ENCODE measurements at regions of chr19 and their contacts with region 1.

Region 1: DNA sequence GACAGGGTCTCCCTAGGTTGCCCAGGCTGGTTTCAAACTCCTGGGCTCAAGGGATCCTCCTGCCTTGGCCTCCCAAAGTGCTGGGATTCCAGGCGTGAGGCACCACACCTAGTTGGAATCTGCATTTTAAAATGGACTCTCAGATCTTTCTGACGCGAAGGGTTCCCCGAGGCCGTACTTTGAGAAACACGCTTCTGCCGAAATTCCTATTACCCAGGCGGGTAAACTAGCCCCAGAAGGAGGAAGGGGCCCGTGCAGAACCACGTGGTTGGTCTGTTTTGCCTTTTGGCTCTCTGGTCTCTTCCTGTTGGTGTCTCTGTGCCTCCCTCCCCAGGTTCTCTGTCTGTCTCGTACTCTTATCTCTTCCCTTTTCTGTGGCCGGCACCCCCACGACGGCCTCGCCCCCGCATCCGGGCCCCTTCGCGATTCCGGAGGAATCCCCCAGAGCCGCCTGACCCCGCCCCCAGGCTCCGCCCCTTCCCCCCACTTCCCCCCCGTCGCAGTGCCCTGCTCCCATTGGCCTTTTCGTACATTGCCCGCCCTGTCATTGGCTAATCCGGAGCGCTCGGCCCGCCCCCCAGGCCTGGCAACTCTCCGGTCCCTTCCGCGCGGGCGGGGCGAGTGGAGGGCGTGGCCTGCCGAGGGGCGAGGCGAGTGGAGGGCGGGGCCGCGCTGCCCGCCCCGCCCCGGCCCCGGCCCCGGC is at the start of gene TNFAIP8L1:
- DNase-seq: peak; percentile 98
- H3K4me3 ChIP-seq: peak within 1 kb of the TSS; percentile 91 to 99 (median 94)
- H3K27ac ChIP-seq: peak within 1 kb of the TSS; percentile 69 to 97 (median 95)
- H3K4me1 ChIP-seq: peaks cover 0 to 56% (median 43%) of the 10 kb centered on the region in 4 donors
- H3K27me3 ChIP-seq: no peaks in the 10 kb centered on the region
- CTCF ChIP-seq: no peak
- EP300 ChIP-seq: no peak
- POLR2A ChIP-seq: no peak
- total RNA-seq, gene TNFAIP8L1: 18.9 to 25.2 (median 20.0) TPM

Region 2: GRCh38 chr19:3970808-3971598 is 668.0 kb before region 1 on chr19 and contains the start of gene DAPK3:
- intact Hi-C with region 1: loop called (anchors 10 kb)
- DNase-seq: peak; percentile 99
- H3K4me3 ChIP-seq: peak within 1 kb of the TSS; percentile 95 to 100 (median 98)
- H3K27ac ChIP-seq: peak within 1 kb of the TSS; percentile 100
- H3K4me1 ChIP-seq: peaks cover 0 to 48% (median 42%) of the 10 kb centered on the region in 4 donors
- H3K27me3 ChIP-seq: no peaks in the 10 kb centered on the region
- CTCF ChIP-seq: no peak
- EP300 ChIP-seq: no peak
- POLR2A ChIP-seq: peak; percentile 80 to 93
- total RNA-seq, gene DAPK3: 91.3 to 167 (median 125) TPM

Region 3: GRCh38 chr19:4518345-4519171 is 120.4 kb before region 1 on chr19 and contains the start of gene PLIN4:
- intact Hi-C with region 1: loop called (anchors 5 kb)
- DNase-seq: peak; percentile 97
- H3K4me3 ChIP-seq: peak within 1 kb of the TSS; percentile 53 to 73 (median 60)
- H3K27ac ChIP-seq: peak within 1 kb of the TSS; percentile 91 to 98 (median 94)
- H3K4me1 ChIP-seq: peaks cover 0 to 56% (median 37%) of the 10 kb centered on the region in 4 donors
- H3K27me3 ChIP-seq: no peaks in the 10 kb centered on the region
- CTCF ChIP-seq: no peak
- EP300 ChIP-seq: peak in 2 of 4 donors; percentile 48 to 81
- POLR2A ChIP-seq: peak; percentile 91 to 97
- total RNA-seq, gene PLIN4: 41.3 to 71.7 (median 55.9) TPM

Region 4: GRCh38 chr19:4576016-4576933 is 62.7 kb before region 1 on chr19:
- intact Hi-C with region 1: loop called (anchors 5 kb)
- DNase-seq: peak; percentile 76
- H3K4me3 ChIP-seq: no peak overlapping the region
- H3K27ac ChIP-seq: peak overlapping the region; percentile 17 to 68 (median 32)
- H3K4me1 ChIP-seq: peaks cover 0 to 11% (median 11%) of the 10 kb centered on the region in 4 donors
- H3K27me3 ChIP-seq: peaks cover 14 to 76% (median 63%) of the 10 kb centered on the region in 3 donors
- CTCF ChIP-seq: peak; percentile 48 to 66 (median 50)
- EP300 ChIP-seq: no peak
- POLR2A ChIP-seq: no peak

Region 5: DNA sequence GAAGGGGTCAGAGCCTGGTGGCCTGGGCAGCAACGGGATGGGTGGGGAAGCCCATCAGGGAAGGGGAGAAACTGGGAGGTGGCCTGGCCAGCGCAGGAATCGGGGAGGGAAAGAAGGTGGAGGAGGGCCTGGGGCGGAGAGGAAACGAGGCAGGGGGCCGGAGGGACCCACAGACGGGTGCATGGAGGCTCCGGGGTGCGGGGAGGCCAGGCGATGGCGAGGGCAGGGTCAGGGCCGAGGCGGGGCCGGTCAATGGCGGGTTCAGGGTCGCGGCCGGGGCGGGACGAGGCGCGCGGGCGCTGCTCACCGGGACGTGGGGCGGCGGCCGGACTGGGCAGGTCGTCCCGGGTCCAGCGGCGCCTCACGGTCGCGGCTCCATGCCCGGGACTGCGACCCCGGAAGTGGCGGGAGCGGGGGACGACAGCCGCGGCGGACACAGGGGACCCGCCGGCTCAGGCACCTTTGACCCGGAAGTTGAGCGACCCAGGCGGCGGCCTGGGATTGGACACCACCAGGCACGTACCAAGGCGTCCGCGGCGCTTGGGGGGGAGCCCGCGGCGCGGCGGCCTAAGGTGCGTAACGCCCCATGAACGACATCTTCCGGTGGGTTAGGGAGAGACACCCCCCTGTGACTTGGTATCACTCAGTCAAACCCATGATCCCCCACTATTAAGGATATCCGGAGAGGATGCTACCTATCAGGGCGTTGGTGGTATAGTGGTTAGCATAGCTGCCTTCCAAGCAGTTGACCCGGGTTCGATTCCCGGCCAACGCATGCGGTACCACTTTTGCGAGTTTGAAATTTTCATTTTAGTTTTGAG is 84.6 kb after region 1 on chr19 and contains the start of gene DPP9:
- intact Hi-C with region 1: loop called (anchors 5 kb)
- DNase-seq: peak; percentile 99
- H3K4me3 ChIP-seq: peak within 1 kb of the TSS; percentile 66 to 100 (median 92)
- H3K27ac ChIP-seq: peak within 1 kb of the TSS; percentile 82 to 97 (median 91)
- H3K4me1 ChIP-seq: peaks cover 0 to 25% (median 20%) of the 10 kb centered on the region in 4 donors
- H3K27me3 ChIP-seq: no peaks in the 10 kb centered on the region
- CTCF ChIP-seq: no peak
- EP300 ChIP-seq: peak in 1 of 4 donors; percentile 21
- POLR2A ChIP-seq: no peak
- total RNA-seq, gene DPP9: 29.6 to 90.6 (median 40.5) TPM

Region 6: DNA sequence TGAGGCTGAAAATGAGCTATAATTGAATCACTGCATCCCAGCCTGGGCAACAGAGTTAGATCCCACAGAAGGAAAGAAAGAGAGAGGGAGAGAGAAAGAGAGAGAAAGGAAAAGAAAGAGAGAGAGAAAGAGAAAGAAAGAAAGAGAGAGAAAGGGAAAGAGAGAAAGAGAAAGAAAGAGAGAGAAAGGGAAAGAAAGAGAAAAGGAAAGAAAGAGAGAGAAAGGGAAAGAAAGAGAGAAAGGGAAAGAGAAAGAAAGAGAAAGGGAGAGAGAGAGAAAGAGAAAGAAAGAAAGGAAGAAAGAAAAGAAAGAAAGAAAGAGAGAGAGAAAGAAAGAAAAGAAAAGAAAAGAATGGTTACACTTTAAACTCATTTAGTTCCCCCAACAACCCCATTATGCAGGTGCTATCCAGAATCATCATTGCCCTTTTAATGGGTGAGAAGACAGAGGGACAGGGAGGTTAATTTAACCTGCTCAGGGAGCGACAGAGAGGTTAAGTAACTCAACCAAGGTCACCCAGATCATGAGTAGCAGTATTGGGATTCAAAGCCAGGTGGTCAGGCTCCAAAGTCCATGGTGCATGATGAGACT is 94.9 kb after region 1 on chr19:
- intact Hi-C with region 1: no loop called
- DNase-seq: no peak
- H3K4me3 ChIP-seq: no peak overlapping the region
- H3K27ac ChIP-seq: no peak overlapping the region
- H3K4me1 ChIP-seq: peaks cover 0 to 8% (median 3%) of the 10 kb centered on the region in 4 donors
- H3K27me3 ChIP-seq: peaks cover 0 to 5% (median 0%) of the 10 kb centered on the region in 3 donors
- CTCF ChIP-seq: no peak
- EP300 ChIP-seq: no peak
- POLR2A ChIP-seq: no peak